Psoas muscle (tissue), 8 donors: ENCODE measurements at regions of chr2 and their contacts with region 1.

Region 1: DNA sequence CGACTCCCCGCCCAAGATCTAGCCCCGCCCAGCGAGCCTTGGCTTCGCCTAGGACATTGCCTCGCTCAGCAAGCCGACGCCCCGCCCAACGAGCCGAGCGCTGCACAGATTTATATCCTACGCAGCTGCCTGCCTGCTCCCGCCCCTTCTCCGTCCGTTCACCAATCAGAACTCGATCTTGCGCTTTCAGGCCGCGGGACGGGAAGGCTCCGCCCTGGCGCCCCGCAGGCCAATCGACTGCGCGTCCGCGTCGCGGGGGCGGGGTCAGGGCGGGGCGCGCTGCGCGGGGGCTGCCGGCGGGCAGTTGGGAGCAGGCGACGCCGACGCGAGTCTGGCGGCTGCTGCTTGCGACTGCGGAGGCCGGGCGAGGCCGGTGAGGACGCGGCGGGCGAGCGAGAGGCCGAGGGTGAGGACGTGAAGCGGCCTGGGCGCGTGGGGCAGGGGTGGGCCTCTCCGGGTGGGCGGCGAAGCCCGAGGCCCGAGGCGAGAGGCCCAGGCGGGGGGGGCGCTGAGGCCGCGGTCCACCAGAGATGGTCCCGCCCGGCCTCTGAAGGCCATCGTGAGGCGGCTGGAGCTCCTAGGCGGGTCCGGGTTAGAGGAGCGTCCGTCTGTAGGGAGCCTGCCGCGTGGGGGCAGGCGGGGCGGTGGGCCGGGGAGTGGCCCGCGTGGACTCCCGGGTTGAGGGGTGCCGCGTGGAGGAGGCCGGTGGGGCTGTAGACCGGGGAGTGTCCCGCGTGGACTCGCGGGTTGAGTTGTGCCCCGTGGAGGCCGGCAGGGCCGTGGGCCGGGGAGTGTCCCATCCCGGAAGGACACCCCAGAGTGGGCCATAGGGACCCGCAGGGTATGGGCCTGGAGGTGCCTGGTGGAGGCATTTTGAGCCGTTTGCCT is at the start of gene FARP2:
- DNase-seq: peak; percentile 99 to 100
- ATAC-seq: peak; percentile 90 to 93 (median 92)
- H3K4me3 ChIP-seq: peak within 1 kb of the TSS; percentile 75
- H3K27ac ChIP-seq: peak within 1 kb of the TSS; percentile 90
- H3K4me1 ChIP-seq: peaks cover 15% of the 10 kb centered on the region
- H3K27me3 ChIP-seq: no peaks in the 10 kb centered on the region
- CTCF ChIP-seq: no peak
- total RNA-seq, gene FARP2: 17.4 to 18.4 (median 17.7) TPM

Region 2: DNA sequence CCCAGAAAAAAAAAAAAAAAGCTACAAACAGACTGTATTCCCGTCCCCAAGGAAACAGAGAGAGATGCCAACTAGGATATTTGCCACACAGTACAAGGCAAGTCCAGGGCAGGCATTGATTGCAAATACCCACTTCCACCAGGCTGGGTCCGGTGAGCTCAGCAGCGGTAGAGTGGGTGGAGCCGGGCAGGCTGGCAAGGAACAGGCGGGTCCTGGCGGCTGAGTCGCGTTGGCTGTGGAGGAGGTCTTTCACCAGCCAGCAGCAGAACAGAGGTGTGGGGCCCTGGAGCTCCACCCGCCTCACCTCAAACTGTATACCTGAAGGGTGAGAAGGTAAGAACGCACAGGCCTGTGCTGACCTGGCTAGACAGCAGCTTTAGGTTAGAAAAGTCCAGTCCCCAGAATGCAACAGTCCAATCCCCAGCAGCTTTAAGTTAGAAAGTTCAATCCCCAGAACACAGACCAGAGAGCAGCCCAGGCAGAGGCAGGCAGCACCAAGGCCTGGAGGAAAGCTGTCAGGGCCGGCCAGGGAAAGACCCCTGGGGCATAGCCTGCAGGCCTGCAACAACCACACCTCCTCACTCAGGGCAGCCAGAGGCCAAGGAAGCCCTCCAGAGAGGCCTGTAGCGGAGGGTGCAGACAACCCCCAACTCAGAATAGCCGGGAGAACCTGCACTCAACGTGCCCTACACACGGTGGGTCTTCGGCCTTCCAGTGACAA is 232.3 kb before region 1 on chr2:
- intact Hi-C with region 1: no loop called
- DNase-seq: peak in 1 of 2 donors; percentile 54
- ATAC-seq: peak in 1 of 4 donors; percentile 13
- H3K4me3 ChIP-seq: no peak overlapping the region
- H3K27ac ChIP-seq: no peak overlapping the region
- H3K4me1 ChIP-seq: no peaks in the 10 kb centered on the region
- H3K27me3 ChIP-seq: no peaks in the 10 kb centered on the region
- CTCF ChIP-seq: no peak

Region 3: GRCh38 chr2:241315093-241315878 is 40.9 kb before region 1 on chr2 and contains the start of gene HDLBP:
- intact Hi-C with region 1: loop called (anchors 5 kb)
- DNase-seq: peak; percentile 100
- ATAC-seq: peak; percentile 89 to 91 (median 90)
- H3K4me3 ChIP-seq: peak within 1 kb of the TSS; percentile 85
- H3K27ac ChIP-seq: peak within 1 kb of the TSS; percentile 98
- H3K4me1 ChIP-seq: peaks cover 77% of the 10 kb centered on the region
- H3K27me3 ChIP-seq: no peaks in the 10 kb centered on the region
- CTCF ChIP-seq: no peak
- total RNA-seq, gene HDLBP: 349 to 526 (median 469) TPM

Region 4: GRCh38 chr2:241391892-241392665 is 35.9 kb after region 1 on chr2:
- intact Hi-C with region 1: no loop called
- DNase-seq: no peak
- ATAC-seq: peak in 2 of 4 donors; percentile 44 to 52
- H3K4me3 ChIP-seq: no peak overlapping the region
- H3K27ac ChIP-seq: no peak overlapping the region
- H3K4me1 ChIP-seq: no peaks in the 10 kb centered on the region
- H3K27me3 ChIP-seq: no peaks in the 10 kb centered on the region
- CTCF ChIP-seq: peak; percentile 25